Posterior cingulate gyrus (tissue), 11 donors: ENCODE measurements at regions of chr6 and their contacts with region 1.

Region 1: DNA sequence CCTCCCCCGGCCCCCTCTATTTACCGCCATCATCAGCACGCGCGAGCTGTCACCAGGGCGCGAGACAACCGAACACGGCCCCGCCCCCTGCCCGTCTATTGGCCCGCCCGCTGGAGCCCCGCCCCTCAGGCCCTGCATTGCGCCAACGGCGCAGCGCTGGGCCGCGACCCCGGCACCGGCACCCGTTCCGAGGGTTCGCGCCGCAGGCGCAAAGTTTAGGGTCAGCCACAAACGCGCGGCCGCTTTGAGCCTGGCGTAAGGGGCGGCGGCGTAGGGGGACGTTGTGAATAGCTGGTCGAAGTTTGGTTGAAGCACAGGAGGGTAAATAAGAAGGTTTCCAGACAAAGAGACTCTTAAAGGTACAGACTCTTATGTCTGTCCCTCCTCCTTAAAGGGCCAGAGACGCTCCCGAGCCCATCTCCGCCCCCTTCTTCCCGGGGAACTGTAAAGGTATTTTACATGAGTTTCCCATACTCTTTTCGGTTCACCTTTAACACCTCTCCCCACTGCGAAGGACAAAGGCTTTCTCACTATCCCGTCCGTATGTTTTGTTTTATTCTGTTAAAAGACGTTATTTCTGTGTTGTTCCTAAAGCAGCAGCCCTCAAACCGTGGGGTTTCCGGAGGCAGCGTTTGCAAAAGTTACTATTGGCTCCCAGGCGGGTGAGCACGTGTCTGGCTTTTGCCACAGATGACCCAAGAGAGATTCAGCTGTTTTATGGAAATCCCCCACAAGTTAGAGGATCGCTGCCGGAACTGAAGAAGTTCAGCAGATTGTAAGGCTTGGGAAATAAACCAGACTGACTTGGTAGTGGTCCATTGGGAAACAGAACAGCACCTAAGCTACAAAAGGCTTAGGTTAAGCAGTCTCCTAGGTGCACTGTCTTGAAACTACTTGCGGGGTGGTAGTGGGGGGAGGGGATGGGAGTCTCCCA is at the start of gene USP49:
- DNase-seq: peak; percentile 78 to 98 (median 87)

Region 2: GRCh38 chr6:41774443-41775240 is 120.9 kb before region 1 on chr6:
- intact Hi-C with region 1: no loop called
- DNase-seq: peak in 2 of 10 donors; percentile 47 to 50

Region 3: DNA sequence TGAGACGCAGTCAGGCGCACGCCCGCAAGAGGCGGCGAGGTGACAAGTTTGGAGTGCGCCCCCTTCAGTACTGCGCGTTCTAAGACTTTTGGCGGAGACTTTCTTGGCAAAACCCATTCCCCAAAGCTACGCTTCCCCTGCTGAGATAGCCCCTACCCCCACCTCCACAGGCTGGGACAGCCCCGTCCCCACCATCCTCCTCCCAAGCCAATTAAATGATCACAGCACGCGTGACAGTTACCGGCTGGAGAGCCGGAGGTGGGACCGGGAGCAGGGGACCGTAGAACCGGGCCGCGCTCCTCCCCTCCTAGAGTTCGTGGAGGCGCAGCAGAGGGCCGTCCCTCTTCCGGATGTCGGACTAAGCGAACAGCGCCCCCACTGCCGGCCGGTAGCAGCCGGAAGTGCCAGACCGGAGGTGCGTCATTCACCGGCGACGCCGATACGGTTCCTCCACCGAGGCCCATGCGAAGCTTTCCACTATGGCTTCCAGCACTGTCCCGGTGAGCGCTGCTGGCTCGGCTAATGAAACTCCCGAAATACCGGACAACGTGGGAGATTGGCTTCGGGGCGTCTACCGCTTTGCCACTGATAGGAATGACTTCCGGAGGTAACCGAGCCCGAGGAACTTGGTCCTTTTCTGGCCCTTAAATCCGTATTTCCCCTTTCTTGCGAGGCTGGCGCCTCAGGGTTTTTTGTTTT is 108.2 kb before region 1 on chr6 and contains the start of gene TOMM6:
- intact Hi-C with region 1: loop called (anchors 10 kb)
- DNase-seq: peak; percentile 90 to 99 (median 94)

Region 4: DNA sequence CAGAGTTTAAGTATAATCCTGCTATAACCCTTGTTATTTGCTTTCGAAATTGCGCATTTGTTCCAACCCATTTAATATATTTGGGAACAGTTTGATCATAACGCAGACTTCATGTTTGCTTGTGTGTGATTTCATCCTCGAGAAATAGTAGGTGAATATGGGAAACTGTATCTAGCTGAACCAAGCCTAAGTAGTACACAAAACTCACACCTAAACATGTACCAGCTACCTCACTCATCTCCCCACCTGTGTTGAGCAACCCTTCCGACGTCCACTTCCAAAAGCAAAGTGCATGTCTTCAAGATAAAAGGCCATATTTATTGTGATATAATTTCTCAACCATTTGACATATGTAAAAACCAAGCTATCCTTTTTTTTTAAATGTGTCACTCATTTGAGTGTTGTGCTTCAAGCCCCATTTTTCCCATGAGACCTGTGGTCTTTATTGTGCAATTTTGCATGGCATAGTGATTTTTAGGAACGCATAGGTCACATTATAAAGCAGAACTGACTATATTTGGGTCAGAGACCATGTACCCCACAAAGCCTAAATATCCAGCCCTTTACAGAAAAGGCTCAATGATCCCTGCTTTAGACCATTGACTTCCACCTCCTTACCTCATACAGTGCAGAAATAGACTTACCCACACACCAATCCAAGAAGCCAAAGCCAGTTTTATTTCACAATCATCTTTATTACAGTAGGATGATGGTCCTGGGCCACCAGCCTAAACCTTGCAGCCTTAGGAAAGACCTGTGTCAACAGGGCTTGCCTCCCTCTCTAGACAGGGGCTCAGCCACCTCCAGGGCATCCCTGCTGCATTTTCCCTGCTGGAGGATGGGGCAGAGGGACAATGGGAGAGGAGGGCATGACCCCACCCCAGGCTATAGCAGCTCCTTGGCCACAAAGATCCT is 39.0 kb after region 1 on chr6:
- intact Hi-C with region 1: loop called (anchors 5 kb)
- DNase-seq: no peak